B cell (primary cell): ENCODE measurements at regions of chr12 and their contacts with region 1.

Region 1: DNA sequence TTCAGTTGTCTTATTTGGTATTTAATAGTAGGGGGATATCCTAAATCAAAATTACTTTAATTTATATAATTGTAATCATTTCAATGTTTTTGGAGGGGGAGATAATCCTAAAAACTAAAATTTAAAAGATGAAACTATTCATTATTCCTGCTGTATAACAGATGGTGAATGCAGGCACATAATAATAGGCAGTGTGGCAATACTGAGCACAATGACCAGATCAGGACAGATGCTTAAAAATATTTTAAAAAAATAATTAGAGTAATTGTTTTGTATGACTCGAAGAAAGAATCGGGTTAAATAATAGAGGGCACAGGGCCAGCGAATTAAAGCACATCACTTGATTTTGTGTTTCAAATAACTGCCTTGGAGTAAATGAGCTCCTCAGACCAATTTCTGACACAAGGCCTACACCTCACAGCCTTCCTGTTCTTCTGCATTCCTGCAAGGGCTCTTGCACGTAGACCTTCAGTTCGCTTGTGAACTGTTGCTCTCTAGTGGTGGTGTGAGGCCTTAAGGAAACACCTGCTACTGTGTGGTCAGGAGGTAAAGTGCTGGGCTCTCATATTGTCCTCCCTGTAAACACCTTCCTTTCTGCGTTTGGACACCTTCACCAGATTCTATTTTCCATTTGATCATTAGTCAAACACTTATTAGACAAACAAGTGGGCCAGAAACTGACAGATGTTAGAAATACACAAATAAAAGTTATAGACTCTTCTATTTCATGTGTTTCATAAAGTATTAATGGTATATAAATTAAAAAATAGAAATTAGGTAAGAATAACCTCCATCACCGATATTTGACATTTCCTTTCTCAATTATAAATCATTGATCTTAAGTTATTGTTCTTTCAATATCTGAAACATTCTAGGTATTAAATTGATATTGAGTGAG is 29.3 kb upstream of the KLRF1 start:
- DNase-seq: peak; percentile 85
- ATAC-seq: peak; percentile 95
- H3K4me3 ChIP-seq: no peak overlapping the region
- H3K4me3 Mint-ChIP-seq: no peak overlapping the region
- H3K27ac ChIP-seq: no peak overlapping the region
- H3K27ac Mint-ChIP-seq: no peak overlapping the region
- H3K4me1 ChIP-seq: peaks cover 25 to 28% of the 10 kb centered on the region in 2 donors
- H3K4me1 Mint-ChIP-seq: peaks cover 34% of the 10 kb centered on the region
- H3K27me3 ChIP-seq: no peaks in the 10 kb centered on the region
- H3K27me3 Mint-ChIP-seq: no peaks in the 10 kb centered on the region
- CTCF ChIP-seq: peak; percentile 81

Region 2: DNA sequence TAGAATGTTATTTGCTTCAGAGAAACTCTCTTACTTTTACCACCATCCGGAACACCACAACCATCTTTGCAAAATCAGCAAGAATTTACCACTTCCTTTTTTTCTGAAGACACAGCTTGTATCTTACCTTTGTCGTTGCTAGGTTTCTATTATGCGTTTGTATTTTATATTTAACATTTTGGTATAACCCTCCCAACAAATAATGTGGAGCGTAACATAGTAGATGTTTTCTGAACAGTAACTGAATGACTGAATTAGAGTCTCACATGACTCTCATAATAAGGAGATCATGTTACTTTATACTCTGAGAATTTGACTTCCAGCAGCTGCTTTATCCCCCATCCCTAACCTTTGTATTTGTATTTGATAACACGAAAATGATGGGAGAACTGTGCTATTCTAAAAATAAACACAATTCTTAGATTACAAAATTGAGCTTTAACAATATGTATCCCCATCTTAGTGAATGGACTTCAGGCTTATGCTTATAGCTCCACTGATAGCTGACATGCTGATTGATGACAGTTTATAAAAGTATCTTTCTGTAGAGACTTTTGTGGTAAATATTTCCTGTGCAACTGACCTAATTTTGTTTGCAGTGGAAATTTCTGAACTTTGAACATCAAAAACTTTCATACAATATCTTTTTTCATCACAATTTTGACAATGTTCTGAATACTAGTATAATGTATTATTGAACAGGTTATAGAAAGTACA is 182.4 kb before region 1 on chr12:
- CTCF ChIA-PET with region 1: no interaction called
- POLR2A ChIA-PET with region 1: no interaction called
- intact Hi-C with region 1: loop called (anchors 5 kb)
- DNase-seq: peak; percentile 65
- ATAC-seq: peak; percentile 74
- H3K4me3 ChIP-seq: peak overlapping the region in 1 of 5 experiments; percentile 18
- H3K4me3 Mint-ChIP-seq: peak overlapping the region; percentile 64
- H3K27ac ChIP-seq: peak overlapping the region; percentile 60 to 81
- H3K27ac Mint-ChIP-seq: peak overlapping the region; percentile 83
- H3K4me1 ChIP-seq: peaks cover 35 to 39% of the 10 kb centered on the region in 2 donors
- H3K4me1 Mint-ChIP-seq: peaks cover 49% of the 10 kb centered on the region
- H3K27me3 ChIP-seq: no peaks in the 10 kb centered on the region
- H3K27me3 Mint-ChIP-seq: no peaks in the 10 kb centered on the region
- CTCF ChIP-seq: no peak

Region 3: DNA sequence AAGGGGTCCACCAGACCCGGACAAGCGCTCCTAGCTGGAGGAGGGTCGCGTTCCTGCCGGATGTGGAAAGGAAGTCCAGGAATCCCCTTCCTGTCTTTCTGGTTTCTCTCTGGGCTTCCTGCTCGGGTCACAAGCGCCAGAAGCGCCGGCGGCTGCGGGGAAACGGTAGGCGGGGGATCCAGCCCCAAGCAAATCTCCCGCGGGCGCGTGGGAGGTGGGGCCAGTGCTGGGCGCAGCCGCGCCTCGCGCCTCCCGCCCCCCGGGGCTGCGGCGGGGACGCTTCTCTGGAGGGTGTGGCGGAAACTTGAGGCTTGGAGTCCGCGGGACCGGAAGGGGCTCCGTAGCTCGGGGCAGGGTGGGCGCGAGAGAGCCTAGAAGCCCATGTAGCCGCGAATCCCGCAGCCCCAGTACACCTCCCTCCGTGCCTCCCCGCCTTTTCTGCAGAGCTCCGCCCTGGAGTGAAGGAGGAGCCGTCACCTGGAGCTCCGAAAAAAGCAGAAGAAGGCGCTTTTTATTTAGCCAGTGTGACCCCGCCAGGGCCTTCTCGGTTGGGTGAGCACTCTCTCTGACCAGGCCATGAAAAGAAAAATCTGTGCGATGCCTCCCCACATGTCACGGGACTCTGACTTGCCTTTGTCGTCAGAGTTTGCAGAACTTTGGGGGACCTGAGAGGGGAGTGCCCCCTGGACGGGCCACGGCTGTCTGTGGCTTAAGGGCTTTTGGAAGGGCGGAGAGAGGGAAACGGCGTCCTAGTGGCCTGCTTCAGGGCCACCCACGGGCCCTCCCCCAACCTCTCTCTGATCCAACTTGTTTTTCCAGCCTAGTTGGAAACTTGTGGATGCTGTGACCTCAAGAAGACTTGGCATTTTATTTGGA is 149.9 kb before region 1 on chr12:
- CTCF ChIA-PET with region 1: interaction called, 10 read pairs
- POLR2A ChIA-PET with region 1: no interaction called
- intact Hi-C with region 1: no loop called
- DNase-seq: peak; percentile 97
- ATAC-seq: peak; percentile 71
- H3K4me3 ChIP-seq: peak overlapping the region; percentile 72 to 99 (median 83)
- H3K4me3 Mint-ChIP-seq: peak overlapping the region; percentile 98
- H3K27ac ChIP-seq: peak overlapping the region; percentile 92 to 98
- H3K27ac Mint-ChIP-seq: peak overlapping the region; percentile 86
- H3K4me1 ChIP-seq: peaks cover 34% of the 10 kb centered on the region in 2 donors
- H3K4me1 Mint-ChIP-seq: peaks cover 52% of the 10 kb centered on the region
- H3K27me3 ChIP-seq: no peaks in the 10 kb centered on the region
- H3K27me3 Mint-ChIP-seq: no peaks in the 10 kb centered on the region
- CTCF ChIP-seq: no peak

Region 4: DNA sequence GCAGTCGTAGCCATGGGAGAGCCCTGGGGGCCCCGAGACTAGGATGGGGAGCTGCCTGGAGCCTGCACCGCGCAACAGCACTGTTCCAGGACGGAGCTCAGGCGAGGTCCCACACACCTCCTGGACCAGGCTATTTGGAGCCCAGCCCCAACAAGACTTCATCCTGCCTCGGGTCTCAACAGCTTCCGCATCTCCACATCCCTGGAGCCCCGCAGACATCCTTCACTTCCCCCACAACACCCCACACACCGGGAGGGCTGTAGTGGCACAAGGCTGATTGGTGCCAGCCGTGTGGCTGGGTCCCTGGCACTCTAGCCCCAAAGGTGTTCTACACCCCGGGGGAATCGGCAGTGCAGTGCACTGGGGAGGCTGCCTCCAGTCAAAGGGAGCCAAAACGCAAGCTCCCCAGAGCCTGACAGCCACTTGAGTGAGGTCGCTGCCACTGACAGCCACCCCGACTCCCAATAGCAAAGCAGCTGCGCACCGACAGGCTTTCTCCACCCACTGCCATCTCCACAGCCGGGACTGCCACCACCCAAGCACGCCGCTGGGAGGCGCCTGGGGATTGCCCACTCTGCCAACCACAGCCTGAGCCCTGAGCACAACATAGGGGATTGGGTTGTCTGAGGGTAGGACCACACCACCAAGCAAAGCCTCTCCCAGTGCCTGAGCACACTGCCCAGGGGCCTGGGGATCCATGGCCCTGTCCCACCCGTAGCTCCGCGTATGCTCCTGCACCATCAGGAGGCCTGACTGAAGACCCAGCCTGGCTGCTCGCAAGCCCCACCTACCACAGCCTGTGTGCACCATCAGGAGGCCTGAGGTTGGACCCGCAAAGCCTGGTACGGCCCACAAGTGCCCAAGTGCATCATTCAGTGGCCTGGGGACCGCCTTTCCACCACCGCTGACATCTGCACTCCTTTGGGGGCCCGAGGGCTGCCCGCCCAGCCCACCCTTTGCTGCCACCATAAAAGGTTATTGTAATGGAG is 16.1 kb after region 1 on chr12:
- CTCF ChIA-PET with region 1: interaction called, 33 read pairs
- POLR2A ChIA-PET with region 1: no interaction called
- intact Hi-C with region 1: no loop called
- DNase-seq: peak; percentile 88
- ATAC-seq: peak; percentile 97
- H3K4me3 ChIP-seq: peak overlapping the region in 4 of 5 experiments; percentile 33 to 63 (median 48)
- H3K4me3 Mint-ChIP-seq: peak overlapping the region; percentile 77
- H3K27ac ChIP-seq: no peak overlapping the region
- H3K27ac Mint-ChIP-seq: no peak overlapping the region
- H3K4me1 ChIP-seq: peaks cover 10 to 23% of the 10 kb centered on the region in 2 donors
- H3K4me1 Mint-ChIP-seq: peaks cover 21% of the 10 kb centered on the region
- H3K27me3 ChIP-seq: peaks cover 0 to 9% (median 0%) of the 10 kb centered on the region in 4 experiments
- H3K27me3 Mint-ChIP-seq: peaks cover 23% of the 10 kb centered on the region
- CTCF ChIP-seq: peak; percentile 93

Region 5: GRCh38 chr12:9925708-9926393 is 127.9 kb after region 1 on chr12:
- CTCF ChIA-PET with region 1: interaction called, 17 read pairs
- POLR2A ChIA-PET with region 1: no interaction called
- intact Hi-C with region 1: no loop called
- DNase-seq: peak; percentile 69
- ATAC-seq: peak; percentile 47
- H3K4me3 ChIP-seq: peak overlapping the region in 3 of 5 experiments; percentile 18 to 22 (median 21)
- H3K4me3 Mint-ChIP-seq: peak overlapping the region; percentile 56
- H3K27ac ChIP-seq: no peak overlapping the region
- H3K27ac Mint-ChIP-seq: no peak overlapping the region
- H3K4me1 ChIP-seq: no peaks in the 10 kb centered on the region
- H3K4me1 Mint-ChIP-seq: peaks cover 3% of the 10 kb centered on the region
- H3K27me3 ChIP-seq: peaks cover 0 to 4% (median 0%) of the 10 kb centered on the region in 4 experiments
- H3K27me3 Mint-ChIP-seq: peaks cover 21% of the 10 kb centered on the region
- CTCF ChIP-seq: peak; percentile 68